ENCODE measurements at regions of chr14 and their contacts with region 1.

Region 1: DNA sequence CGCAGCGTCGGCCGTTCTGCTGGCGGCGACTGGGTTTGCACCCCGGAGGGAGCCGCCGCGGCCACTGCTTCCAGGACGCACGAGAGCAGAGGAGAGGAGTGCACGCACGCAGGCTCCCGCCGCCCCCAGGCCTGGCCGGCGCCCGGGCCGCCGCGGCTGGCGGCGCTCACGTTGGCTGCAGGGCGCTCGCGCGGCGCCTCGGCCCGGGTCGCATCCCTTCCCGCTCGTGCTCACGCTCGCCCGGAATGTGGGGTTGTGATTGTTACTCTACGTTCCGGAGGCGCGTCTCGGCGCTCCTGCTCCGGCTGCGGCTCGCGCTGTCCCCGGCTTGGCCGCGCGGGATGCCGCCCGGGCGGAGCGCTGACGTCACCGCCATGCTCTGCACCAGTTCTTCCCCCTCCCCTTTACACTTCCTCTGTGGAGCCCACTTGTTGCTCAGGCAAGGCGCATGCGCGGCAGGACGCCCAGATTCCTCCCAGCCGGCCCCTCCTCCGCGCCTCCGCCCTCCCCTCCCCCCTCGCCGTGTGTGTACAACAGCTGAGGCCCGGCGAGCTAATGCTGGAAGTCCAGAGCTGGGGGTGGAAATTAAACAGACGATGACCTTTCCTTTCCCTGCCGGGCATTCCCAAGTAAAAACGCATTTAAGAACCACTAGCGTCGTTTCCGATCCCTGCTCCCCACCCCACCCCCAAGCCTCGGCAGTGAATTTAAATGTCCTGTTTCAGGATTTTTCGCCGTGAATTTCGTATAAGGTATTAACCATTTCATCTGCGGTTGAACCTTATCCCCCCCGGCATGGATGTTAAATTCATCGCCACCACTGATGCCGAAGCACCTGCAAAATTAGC is at the start of gene IRF2BPL:
- DNase-seq: peak; percentile 95 to 96 (median 95)
- H3K4me3 ChIP-seq: peak within 1 kb of the TSS; percentile 57 to 80
- H3K4me3 Mint-ChIP-seq: peak within 1 kb of the TSS; percentile 93 to 97 (median 95)
- H3K27ac ChIP-seq: peak within 1 kb of the TSS; percentile 93
- H3K27ac Mint-ChIP-seq: peak within 1 kb of the TSS; percentile 97 to 100 (median 98)
- H3K4me1 ChIP-seq: peaks cover 77% of the 10 kb centered on the region
- H3K4me1 Mint-ChIP-seq: peaks cover 37 to 72% (median 52%) of the 10 kb centered on the region in 4 donors
- H3K27me3 ChIP-seq: no peaks in the 10 kb centered on the region
- H3K27me3 Mint-ChIP-seq: no peaks in the 10 kb centered on the region
- total RNA-seq, gene IRF2BPL: 36.6 to 37.7 TPM

Region 2: DNA sequence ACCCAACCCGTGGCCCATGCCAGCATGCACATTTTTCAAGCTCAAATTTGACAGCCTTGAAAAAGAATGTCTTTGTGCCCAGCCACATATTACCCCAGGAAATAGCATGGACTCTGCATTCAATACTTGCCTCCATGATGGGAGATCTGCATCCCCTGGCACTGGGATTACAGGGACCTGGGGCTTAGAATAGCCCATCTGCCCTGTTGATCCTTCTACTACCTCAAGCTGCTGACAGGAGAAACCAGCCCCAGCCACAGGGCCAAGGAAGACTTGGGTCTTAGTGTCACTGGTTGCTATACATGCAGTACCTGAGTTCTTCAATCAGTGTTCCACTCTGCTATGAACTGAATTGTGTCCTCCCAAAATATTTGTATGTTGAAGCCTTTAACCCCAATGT is 117.1 kb before region 1 on chr14:
- CTCF ChIA-PET with region 1: interaction called, 18 read pairs
- POLR2A ChIA-PET with region 1: interaction called, 22 read pairs
- intact Hi-C with region 1: loop called (anchors 1 kb)
- DNase-seq: no peak
- H3K4me3 ChIP-seq: no peak overlapping the region
- H3K4me3 Mint-ChIP-seq: no peak overlapping the region
- H3K27ac ChIP-seq: no peak overlapping the region
- H3K27ac Mint-ChIP-seq: peak overlapping the region in 3 of 7 donors; percentile 30 to 69 (median 30)
- H3K4me1 ChIP-seq: peaks cover 37% of the 10 kb centered on the region
- H3K4me1 Mint-ChIP-seq: peaks cover 21 to 38% (median 22%) of the 10 kb centered on the region in 4 donors
- H3K27me3 ChIP-seq: no peaks in the 10 kb centered on the region
- H3K27me3 Mint-ChIP-seq: no peaks in the 10 kb centered on the region

Region 3: DNA sequence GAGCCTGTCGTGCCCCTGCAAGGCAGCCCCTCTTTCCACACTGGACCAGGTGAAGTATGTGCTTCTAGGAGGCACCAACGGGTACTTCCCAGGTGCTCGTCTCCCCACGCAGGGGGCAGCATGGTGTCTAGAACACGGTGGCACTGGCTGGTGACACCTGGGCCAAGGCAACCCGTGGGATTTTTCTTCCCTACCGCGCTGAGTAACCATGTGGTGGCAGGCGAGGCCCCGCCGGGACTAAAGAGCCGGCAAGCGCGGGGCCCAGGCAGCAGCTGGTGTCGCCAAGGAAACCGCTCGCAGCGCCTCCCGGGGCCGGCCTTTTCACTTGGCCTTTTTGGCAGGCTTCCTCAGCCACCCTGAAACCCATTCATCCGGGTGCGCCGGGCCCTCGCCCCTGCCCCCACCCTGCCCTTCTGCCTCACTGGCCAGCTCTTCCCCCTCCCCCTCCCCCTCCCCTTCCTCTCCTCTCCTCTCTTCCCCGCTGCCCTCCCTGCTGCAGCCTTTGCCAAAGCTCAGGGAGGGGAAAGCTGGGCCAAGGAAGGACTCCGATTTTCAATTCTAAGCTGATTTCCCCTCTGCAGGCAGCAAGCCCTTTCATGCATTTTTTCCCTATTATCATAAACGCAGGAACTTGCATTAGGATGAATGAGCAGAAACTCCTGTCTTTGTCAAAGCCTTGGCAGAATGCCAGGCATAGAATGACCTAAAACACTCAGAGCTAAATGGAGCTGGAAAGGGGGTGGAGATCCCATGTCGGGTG is 81.3 kb before region 1 on chr14:
- CTCF ChIA-PET with region 1: interaction called, 21 read pairs
- POLR2A ChIA-PET with region 1: interaction called, 132 read pairs
- intact Hi-C with region 1: no loop called
- DNase-seq: peak; percentile 68 to 82 (median 72)
- H3K4me3 ChIP-seq: peak overlapping the region in 1 of 2 donors; percentile 19
- H3K4me3 Mint-ChIP-seq: peak overlapping the region in 7 of 8 donors; percentile 4 to 65 (median 57)
- H3K27ac ChIP-seq: peak overlapping the region; percentile 33
- H3K27ac Mint-ChIP-seq: peak overlapping the region; percentile 37 to 93 (median 87)
- H3K4me1 ChIP-seq: peaks cover 20% of the 10 kb centered on the region
- H3K4me1 Mint-ChIP-seq: peaks cover 16 to 39% (median 24%) of the 10 kb centered on the region in 4 donors
- H3K27me3 ChIP-seq: no peaks in the 10 kb centered on the region
- H3K27me3 Mint-ChIP-seq: no peaks in the 10 kb centered on the region

Region 4: DNA sequence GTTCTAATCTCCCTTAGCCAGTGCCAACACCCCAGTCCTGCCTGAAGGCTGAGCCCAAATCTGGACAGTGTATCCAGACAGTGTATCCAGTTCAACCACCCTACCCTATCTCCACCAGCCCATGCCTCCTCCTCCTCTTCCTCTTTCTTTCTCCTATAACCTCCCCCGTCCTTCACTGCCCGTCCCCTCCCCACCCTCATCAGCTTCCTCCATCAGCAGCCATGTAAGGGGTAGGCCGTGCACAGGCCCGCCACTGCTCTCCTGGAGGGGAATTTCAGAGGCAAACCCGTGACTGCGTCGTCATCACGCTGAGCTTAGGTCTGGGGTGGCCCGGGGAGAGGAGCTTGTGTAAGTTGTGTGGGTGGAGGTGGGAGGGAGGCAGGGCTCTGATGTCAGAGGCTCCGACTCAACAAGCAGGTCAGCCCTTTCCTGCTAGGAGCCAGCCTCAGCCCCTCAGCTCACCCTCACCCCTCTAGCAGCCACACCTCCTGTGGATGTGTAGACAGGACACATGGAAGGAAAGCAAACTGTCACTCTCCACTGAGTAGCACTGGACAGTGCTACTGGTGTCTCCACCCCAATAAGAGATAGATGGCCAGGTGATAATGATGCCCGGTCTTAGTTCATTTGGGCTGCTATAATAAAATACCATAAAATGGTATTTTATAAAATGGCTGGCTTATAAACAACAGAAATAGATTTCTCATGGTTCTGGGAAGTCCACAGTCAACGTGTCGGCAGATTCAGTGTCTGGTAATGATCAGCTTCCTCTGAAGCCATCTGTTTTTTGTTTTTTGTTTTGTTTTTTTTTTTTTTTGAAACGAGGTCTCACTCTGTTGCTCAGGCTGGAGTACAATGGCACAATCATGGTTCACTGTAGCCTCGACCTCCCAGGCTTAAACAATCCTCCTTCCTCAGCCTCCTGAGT is 50.6 kb before region 1 on chr14:
- CTCF ChIA-PET with region 1: no interaction called
- POLR2A ChIA-PET with region 1: interaction called, 13 read pairs
- intact Hi-C with region 1: no loop called
- DNase-seq: peak; percentile 67 to 97 (median 74)
- H3K4me3 ChIP-seq: no peak overlapping the region
- H3K4me3 Mint-ChIP-seq: peak overlapping the region in 7 of 8 donors; percentile 4 to 75 (median 43)
- H3K27ac ChIP-seq: peak overlapping the region; percentile 54
- H3K27ac Mint-ChIP-seq: peak overlapping the region; percentile 79 to 94 (median 93)
- H3K4me1 ChIP-seq: peaks cover 18% of the 10 kb centered on the region
- H3K4me1 Mint-ChIP-seq: peaks cover 10 to 13% (median 11%) of the 10 kb centered on the region in 4 donors
- H3K27me3 ChIP-seq: no peaks in the 10 kb centered on the region
- H3K27me3 Mint-ChIP-seq: no peaks in the 10 kb centered on the region

Region 5: GRCh38 chr14:77040059-77040740 is 11.6 kb after region 1 on chr14:
- CTCF ChIA-PET with region 1: interaction called, 59 read pairs
- POLR2A ChIA-PET with region 1: interaction called, 456 read pairs
- intact Hi-C with region 1: loop called (anchors 1 kb)
- DNase-seq: peak; percentile 96 to 99 (median 99)
- H3K4me3 ChIP-seq: peak overlapping the region; percentile 8 to 53
- H3K4me3 Mint-ChIP-seq: peak overlapping the region; percentile 84 to 93 (median 86)
- H3K27ac ChIP-seq: peak overlapping the region; percentile 95
- H3K27ac Mint-ChIP-seq: peak overlapping the region; percentile 97 to 100 (median 99)
- H3K4me1 ChIP-seq: peaks cover 94% of the 10 kb centered on the region
- H3K4me1 Mint-ChIP-seq: peaks cover 50 to 97% (median 84%) of the 10 kb centered on the region in 4 donors
- H3K27me3 ChIP-seq: no peaks in the 10 kb centered on the region
- H3K27me3 Mint-ChIP-seq: no peaks in the 10 kb centered on the region

Region 6: GRCh38 chr14:77124345-77125280 is 96.0 kb after region 1 on chr14:
- CTCF ChIA-PET with region 1: no interaction called
- POLR2A ChIA-PET with region 1: interaction called, 16 read pairs
- intact Hi-C with region 1: no loop called
- DNase-seq: peak; percentile 72 to 83 (median 79)
- H3K4me3 ChIP-seq: peak overlapping the region; percentile 66 to 82
- H3K4me3 Mint-ChIP-seq: peak overlapping the region; percentile 85 to 92 (median 88)
- H3K27ac ChIP-seq: peak overlapping the region; percentile 45
- H3K27ac Mint-ChIP-seq: peak overlapping the region; percentile 50 to 95 (median 91)
- H3K4me1 ChIP-seq: peaks cover 57% of the 10 kb centered on the region
- H3K4me1 Mint-ChIP-seq: peaks cover 17 to 59% (median 45%) of the 10 kb centered on the region in 4 donors
- H3K27me3 ChIP-seq: no peaks in the 10 kb centered on the region
- H3K27me3 Mint-ChIP-seq: peaks cover 6 to 13% of the 10 kb centered on the region in 2 donors

Measured in CD4-positive, alpha-beta memory T cell (primary cell).